Activated T-helper 1 cell treated with anti-CD3 and anti-CD28 coated beads, Interleukin-12 subunit alpha, Interleukin-12 subunit beta, Interleukin-2, Interleukin-4 antibody, amounts not matched to agents 30 ng/mL and 10 ng/mL and 1 ng/mL, durations not matched to agents 14 hours and 24 hours and 36 hours (primary cell): ENCODE measurements at regions of chr17 and their contacts with region 1.

Region 1: DNA sequence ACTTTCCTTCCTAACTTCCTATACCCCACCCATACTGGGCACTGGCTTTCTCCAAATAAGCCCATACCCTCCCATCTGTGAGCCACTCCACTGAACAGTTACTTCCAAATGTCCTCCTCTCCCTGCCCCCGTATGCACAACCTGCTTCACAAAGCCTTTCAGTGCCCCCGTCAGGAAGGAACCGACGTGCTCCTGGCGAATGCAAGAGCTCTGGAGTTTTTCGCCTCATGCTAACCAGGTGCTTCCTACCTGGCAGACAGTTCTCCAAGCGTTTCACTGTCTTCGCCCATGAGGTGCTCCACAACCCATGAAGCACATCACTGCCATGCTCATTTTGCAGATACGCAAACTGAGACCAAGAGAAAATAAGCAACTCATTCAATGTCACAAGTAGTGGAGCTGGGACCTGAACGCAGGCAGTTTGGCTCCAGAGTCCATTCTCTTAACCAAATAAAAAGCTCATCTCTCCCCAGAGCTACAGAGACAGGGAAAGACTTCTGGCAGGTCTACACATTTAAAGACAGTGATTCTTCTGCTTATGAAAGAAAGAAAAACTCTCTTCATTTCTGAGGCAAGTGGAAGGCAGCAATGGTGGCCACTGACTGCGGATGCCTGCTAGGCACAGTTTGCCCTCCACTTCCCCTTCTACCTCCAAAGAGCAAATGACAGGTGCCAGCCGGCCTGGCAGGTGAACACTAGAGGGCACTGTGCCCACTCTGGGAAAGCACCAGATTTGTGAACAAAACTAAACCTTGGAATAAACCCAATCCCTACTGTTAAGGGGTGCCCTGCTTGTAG is 23.8 kb downstream of the SPHK1 start:
- DNase-seq: peak; percentile 42
- H3K4me3 Mint-ChIP-seq: no peak overlapping the region
- H3K27ac Mint-ChIP-seq: no peak overlapping the region
- H3K4me1 Mint-ChIP-seq: peaks cover 6% of the 10 kb centered on the region
- H3K27me3 Mint-ChIP-seq: no peaks in the 10 kb centered on the region

Region 2: GRCh38 chr17:76385892-76386721 is 22.1 kb before region 1 on chr17:
- intact Hi-C with region 1: no loop called
- DNase-seq: peak; percentile 78
- H3K4me3 Mint-ChIP-seq: peak overlapping the region; percentile 75
- H3K27ac Mint-ChIP-seq: no peak overlapping the region
- H3K4me1 Mint-ChIP-seq: peaks cover 5% of the 10 kb centered on the region
- H3K27me3 Mint-ChIP-seq: peaks cover 6% of the 10 kb centered on the region

Region 3: GRCh38 chr17:76452660-76453430 is 44.6 kb after region 1 on chr17 and contains the start of gene UBE2O:
- intact Hi-C with region 1: loop called (anchors 2 kb)
- DNase-seq: peak; percentile 93
- H3K4me3 Mint-ChIP-seq: peak within 1 kb of the TSS; percentile 91
- H3K27ac Mint-ChIP-seq: peak within 1 kb of the TSS; percentile 87
- H3K4me1 Mint-ChIP-seq: peaks cover 42% of the 10 kb centered on the region
- H3K27me3 Mint-ChIP-seq: peaks cover 10% of the 10 kb centered on the region
- total RNA-seq, gene UBE2O: 44.9 and 45.1 TPM in 2 replicates